Caco-2 (cell line): ENCODE measurements at regions of chr13 and their contacts with region 1.

Region 1: DNA sequence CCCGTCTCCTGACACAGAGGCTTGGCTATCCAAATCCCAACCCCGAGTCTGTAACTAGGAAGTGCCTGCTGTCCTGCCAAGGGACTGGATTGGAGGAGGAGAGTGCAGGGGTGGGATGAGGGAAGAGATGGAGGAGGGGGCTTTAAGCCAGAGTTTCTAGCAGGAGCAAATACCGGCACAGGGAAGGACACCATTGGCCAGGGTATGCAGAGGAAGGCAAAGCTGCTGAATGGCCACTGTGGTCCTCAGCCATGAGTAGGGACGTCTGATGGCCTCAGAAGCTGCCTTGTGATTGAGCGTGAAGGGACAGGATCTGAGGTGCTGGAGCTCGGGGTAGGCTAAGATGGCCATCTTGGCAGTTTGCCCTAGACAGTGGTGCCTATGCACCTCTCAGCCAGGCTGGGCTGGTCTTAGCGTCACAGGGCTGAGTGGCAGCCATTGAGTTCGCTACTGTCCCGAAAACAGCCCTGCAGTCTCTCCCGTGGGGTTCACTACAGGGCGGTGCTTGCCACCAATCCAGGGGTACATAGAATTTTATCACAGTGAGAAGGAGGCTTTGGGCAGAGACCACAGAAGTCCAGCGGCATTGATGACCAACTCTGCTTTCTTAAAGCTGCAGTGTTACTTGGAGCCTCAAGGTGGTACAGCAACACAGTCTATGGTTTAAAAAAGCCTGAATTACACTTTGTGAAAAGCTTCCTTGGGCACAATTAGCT is 61.8 kb downstream of the AKAP11 start:
- DNase-seq: peak in 1 of 2 experiments; percentile 29
- H3K4me3 ChIP-seq: no peak overlapping the region
- H3K4me3 Mint-ChIP-seq: no peak overlapping the region
- H3K27ac Mint-ChIP-seq: no peak overlapping the region
- H3K4me1 ChIP-seq: no peaks in the 10 kb centered on the region
- H3K4me1 Mint-ChIP-seq: no peaks in the 10 kb centered on the region
- H3K27me3 ChIP-seq: no peaks in the 10 kb centered on the region
- H3K27me3 Mint-ChIP-seq: no peaks in the 10 kb centered on the region
- CTCF ChIP-seq: peak; percentile 46 to 66

Region 2: DNA sequence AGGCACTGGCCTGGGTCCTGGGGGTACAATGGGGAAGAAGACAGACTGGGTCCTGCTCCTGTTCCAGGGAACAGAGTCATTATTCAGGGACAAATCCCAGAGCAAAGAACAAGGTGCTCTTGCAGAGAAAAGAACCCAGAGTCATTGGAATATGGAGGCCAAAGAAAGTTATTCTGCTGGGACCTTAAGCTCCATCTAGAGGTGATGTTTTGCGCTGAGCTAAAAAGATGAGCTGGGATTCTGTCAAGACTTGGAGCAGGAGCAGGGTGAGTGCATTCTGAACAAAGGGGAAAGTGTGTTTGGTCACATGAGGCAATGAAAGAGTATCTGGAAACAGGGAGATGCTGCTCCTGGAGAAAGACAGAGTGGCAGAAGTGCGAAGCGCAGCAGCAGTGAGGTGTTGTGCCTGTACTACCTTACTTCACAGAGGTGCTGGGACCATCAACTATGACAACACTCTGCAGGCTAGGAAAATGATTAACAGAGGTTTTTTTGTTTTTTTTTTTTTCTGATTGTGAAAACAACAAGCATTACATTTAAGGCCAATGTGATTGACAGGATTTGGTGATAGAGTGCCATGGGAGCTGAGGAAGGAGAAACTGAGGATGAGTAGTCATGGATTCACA is 144.9 kb after region 1 on chr13:
- CTCF ChIA-PET with region 1: interaction called, 56 read pairs
- POLR2A ChIA-PET with region 1: no interaction called
- intact Hi-C with region 1: loop called (anchors 1 kb)
- DNase-seq: peak in 1 of 2 experiments; percentile 28
- H3K4me3 ChIP-seq: no peak overlapping the region
- H3K4me3 Mint-ChIP-seq: no peak overlapping the region
- H3K27ac Mint-ChIP-seq: no peak overlapping the region
- H3K4me1 ChIP-seq: no peaks in the 10 kb centered on the region
- H3K4me1 Mint-ChIP-seq: no peaks in the 10 kb centered on the region
- H3K27me3 ChIP-seq: no peaks in the 10 kb centered on the region
- H3K27me3 Mint-ChIP-seq: no peaks in the 10 kb centered on the region
- CTCF ChIP-seq: peak; percentile 38 to 60

Region 3: GRCh38 chr13:42715909-42716308 is 382.1 kb after region 1 on chr13:
- CTCF ChIA-PET with region 1: no interaction called
- POLR2A ChIA-PET with region 1: no interaction called
- intact Hi-C with region 1: loop called (anchors 5 kb)
- DNase-seq: no peak
- H3K4me3 ChIP-seq: no peak overlapping the region
- H3K4me3 Mint-ChIP-seq: no peak overlapping the region
- H3K27ac Mint-ChIP-seq: no peak overlapping the region
- H3K4me1 ChIP-seq: no peaks in the 10 kb centered on the region
- H3K4me1 Mint-ChIP-seq: no peaks in the 10 kb centered on the region
- H3K27me3 ChIP-seq: no peaks in the 10 kb centered on the region
- H3K27me3 Mint-ChIP-seq: peaks cover 15% of the 10 kb centered on the region
- CTCF ChIP-seq: no peak